Endothelial cell of umbilical vein (primary cell): ENCODE measurements at regions of chr2 and their contacts with region 1.

Region 1: GRCh38 chr2:33022989-33023727 is 76.4 kb downstream of the LTBP1 start:
- DNase-seq: peak; percentile 98
- H3K4me3 ChIP-seq: no peak overlapping the region
- H3K27ac ChIP-seq: peak overlapping the region; percentile 88
- H3K4me1 ChIP-seq: peaks cover 41% of the 10 kb centered on the region
- H3K27me3 ChIP-seq: no peaks in the 10 kb centered on the region
- CTCF ChIP-seq: no peak
- POLR2A ChIP-seq: peak; percentile 52

Region 2: DNA sequence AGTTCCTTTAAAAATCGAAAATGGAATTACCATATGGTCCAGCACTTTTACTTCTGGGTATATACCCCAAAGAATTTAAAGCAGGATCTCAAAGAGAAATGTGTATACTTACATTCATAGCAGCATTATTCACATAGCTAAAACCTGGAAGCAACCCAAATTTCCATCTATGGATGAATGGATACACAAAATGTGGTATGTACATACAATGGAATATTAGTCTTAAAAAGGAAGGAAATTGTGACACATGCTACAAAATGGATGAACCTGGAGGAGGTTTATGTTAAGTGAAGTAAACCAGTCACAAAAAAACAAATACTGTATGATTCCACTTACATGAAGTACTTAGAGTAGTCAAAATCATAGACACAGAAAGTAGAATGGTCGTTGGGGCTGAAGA is 224.3 kb before region 1 on chr2:
- CTCF ChIA-PET with region 1: interaction called, 3 read pairs
- POLR2A ChIA-PET with region 1: no interaction called
- dilution Hi-C with region 1: no loop called
- intact Hi-C with region 1: loop called (anchors 5 kb)
- DNase-seq: peak; percentile 90
- H3K4me3 ChIP-seq: no peak overlapping the region
- H3K27ac ChIP-seq: peak overlapping the region; percentile 50
- H3K4me1 ChIP-seq: peaks cover 16% of the 10 kb centered on the region
- H3K27me3 ChIP-seq: no peaks in the 10 kb centered on the region
- CTCF ChIP-seq: no peak
- POLR2A ChIP-seq: no peak

Region 3: GRCh38 chr2:32812316-32812715 is 210.8 kb before region 1 on chr2:
- CTCF ChIA-PET with region 1: no interaction called
- POLR2A ChIA-PET with region 1: no interaction called
- dilution Hi-C with region 1: no loop called
- intact Hi-C with region 1: no loop called
- DNase-seq: peak; percentile 65
- H3K4me3 ChIP-seq: no peak overlapping the region
- H3K27ac ChIP-seq: peak overlapping the region; percentile 39
- H3K4me1 ChIP-seq: peaks cover 8% of the 10 kb centered on the region
- H3K27me3 ChIP-seq: no peaks in the 10 kb centered on the region
- CTCF ChIP-seq: no peak
- POLR2A ChIP-seq: no peak

Region 4: DNA sequence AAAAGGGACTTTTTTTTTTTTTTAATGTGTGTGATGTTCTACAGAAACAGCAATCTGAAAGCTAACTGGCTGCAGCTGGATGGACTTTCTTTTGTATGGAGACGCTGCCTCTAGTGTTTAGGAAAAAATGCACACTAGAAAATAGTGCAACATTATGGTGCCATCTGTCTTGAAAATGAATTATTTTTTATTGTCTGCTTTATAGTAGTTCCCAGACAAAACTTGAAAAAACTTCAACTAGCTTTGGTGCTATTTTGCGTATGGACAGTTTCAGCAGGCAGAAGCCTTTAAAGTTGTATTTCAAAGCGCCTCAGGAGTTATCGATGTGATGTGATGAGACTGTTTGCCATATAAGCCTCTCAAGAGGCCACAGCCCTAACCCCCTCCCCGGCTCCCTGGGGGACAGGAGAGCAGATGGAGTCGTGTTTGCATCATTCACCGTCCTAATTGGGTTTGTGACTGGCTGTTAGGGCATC is 10.5 kb after region 1 on chr2:
- CTCF ChIA-PET with region 1: interaction called, 26 read pairs
- POLR2A ChIA-PET with region 1: no interaction called
- dilution Hi-C with region 1: no loop called
- intact Hi-C with region 1: no loop called
- DNase-seq: peak; percentile 67
- H3K4me3 ChIP-seq: no peak overlapping the region
- H3K27ac ChIP-seq: no peak overlapping the region
- H3K4me1 ChIP-seq: peaks cover 15% of the 10 kb centered on the region
- H3K27me3 ChIP-seq: no peaks in the 10 kb centered on the region
- CTCF ChIP-seq: peak; percentile 13 to 46
- POLR2A ChIP-seq: no peak

Region 5: DNA sequence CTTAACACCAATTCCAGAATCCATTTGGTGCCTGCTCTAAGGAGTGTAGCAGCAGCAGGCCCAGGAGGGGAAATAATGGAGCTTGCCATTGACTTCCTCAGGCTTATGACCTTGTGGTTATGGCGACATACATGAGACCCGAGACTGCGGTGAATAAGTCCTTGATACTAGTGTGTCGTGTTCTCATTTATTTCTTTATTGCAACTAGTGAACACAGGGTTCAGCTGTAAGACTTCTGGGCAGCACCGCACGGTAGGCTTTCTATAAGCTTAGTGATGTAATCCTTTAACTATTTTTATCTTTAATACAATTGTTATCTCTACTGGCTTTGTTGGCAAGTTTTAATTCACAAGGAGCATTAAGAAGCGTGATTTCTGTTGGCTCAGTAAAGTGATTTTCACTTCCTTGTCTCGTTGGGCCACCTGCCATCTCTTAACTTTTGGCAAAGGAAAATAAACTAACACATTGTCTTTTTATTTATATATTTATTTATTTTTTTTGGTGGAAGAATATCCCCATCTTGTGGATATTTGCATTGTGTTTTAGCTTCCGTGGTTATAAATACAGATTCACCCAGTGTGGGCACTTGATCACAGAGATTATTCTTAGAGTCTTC is 63.4 kb after region 1 on chr2:
- CTCF ChIA-PET with region 1: interaction called, 9 read pairs
- POLR2A ChIA-PET with region 1: no interaction called
- dilution Hi-C with region 1: no loop called
- intact Hi-C with region 1: loop called (anchors 5 kb)
- DNase-seq: peak; percentile 83
- H3K4me3 ChIP-seq: no peak overlapping the region
- H3K27ac ChIP-seq: peak overlapping the region; percentile 83
- H3K4me1 ChIP-seq: peaks cover 21% of the 10 kb centered on the region
- H3K27me3 ChIP-seq: no peaks in the 10 kb centered on the region
- CTCF ChIP-seq: no peak
- POLR2A ChIP-seq: no peak

Region 6: GRCh38 chr2:33275689-33276444 is 252.7 kb after region 1 on chr2:
- CTCF ChIA-PET with region 1: interaction called, 3 read pairs
- POLR2A ChIA-PET with region 1: no interaction called
- dilution Hi-C with region 1: no loop called
- intact Hi-C with region 1: loop called (anchors 5 kb)
- DNase-seq: peak; percentile 80
- H3K4me3 ChIP-seq: no peak overlapping the region
- H3K27ac ChIP-seq: peak overlapping the region; percentile 84
- H3K4me1 ChIP-seq: peaks cover 6% of the 10 kb centered on the region
- H3K27me3 ChIP-seq: no peaks in the 10 kb centered on the region
- CTCF ChIP-seq: no peak
- POLR2A ChIP-seq: no peak

Region 7: DNA sequence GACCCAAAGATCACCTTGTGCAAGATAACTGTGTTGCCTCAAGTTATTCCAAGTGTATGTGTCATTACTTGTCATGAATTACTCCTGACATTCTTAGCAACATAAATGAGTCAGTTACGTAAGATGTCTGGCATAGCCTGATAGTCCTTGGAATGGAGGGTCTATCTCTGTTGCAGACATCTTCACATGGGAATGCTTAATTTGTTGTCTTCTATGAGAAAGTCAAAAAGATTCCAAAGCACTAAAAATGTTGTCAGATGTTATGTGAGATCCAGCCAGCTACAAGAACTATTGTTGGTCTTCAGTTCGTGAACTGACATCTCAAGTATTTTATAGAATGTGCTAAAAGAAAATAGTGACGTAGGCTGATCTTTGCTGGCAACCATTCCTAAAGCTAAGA is 275.1 kb after region 1 on chr2:
- CTCF ChIA-PET with region 1: no interaction called
- POLR2A ChIA-PET with region 1: no interaction called
- dilution Hi-C with region 1: no loop called
- intact Hi-C with region 1: no loop called
- DNase-seq: peak; percentile 24
- H3K4me3 ChIP-seq: no peak overlapping the region
- H3K27ac ChIP-seq: no peak overlapping the region
- H3K4me1 ChIP-seq: peaks cover 4% of the 10 kb centered on the region
- H3K27me3 ChIP-seq: no peaks in the 10 kb centered on the region
- CTCF ChIP-seq: no peak
- POLR2A ChIP-seq: no peak

Region 8: GRCh38 chr2:33395655-33396249 is 372.6 kb after region 1 on chr2:
- CTCF ChIA-PET with region 1: interaction called, 4 read pairs
- POLR2A ChIA-PET with region 1: no interaction called
- dilution Hi-C with region 1: no loop called
- intact Hi-C with region 1: loop called (anchors 1 kb)
- DNase-seq: peak; percentile 76
- H3K4me3 ChIP-seq: no peak overlapping the region
- H3K27ac ChIP-seq: no peak overlapping the region
- H3K4me1 ChIP-seq: no peaks in the 10 kb centered on the region
- H3K27me3 ChIP-seq: no peaks in the 10 kb centered on the region
- CTCF ChIP-seq: peak; percentile 56 to 58
- POLR2A ChIP-seq: no peak